ENCODE measurements at regions of chr16 and their contacts with region 1.

Region 1: DNA sequence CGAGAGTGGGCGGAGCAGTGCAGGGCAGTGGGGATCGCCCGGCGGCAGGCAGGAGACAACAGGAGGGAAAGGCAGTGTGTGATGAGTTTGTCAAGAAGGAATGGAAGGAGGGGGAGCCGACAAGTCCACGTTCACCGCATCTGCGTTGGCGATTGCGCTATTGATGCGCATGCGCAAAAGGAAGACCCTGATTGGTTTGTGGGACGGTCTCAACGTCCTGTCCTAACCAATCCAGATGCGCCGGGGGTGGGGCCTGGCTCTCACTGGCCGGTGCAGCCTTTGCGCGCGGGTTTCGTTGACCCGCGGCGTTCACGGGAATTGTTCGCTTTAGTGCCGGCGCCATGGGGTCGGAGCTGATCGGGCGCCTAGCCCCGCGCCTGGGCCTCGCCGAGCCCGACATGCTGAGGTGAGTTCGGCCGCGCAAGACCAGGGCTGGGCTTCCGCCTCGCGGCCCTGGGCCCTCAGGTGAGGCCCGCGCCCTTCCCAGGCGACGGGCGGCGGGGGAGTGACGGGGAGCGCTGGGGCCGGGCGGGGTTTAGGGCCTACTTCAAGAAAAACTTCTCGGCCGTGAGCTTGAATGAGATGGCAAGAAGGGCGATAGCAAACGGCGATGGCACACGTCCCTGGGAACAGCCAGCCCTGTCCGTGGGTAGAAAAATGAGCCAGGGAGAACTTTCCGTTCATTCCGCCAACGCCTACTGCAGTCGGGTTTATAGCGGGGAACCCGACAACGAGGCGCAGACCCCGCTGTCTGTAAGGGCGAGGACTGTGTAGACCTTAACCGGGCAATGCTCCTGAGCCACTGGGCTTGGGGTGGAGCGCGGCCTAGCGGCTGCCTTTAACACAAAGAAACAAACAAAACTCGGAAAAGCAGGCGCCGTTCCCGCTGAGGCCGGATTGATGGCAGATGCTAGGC is at the start of gene ORC6:
- DNase-seq: peak; percentile 98
- H3K4me3 ChIP-seq: peak within 1 kb of the TSS; percentile 71 to 74
- H3K27ac ChIP-seq: peak within 1 kb of the TSS; percentile 92 to 95
- H3K4me1 ChIP-seq: peaks cover 4% of the 10 kb centered on the region
- H3K27me3 ChIP-seq: no peaks in the 10 kb centered on the region
- CTCF ChIP-seq: peak in 1 of 4 experiments; percentile 31
- POLR2A ChIP-seq: no peak
- total RNA-seq, gene ORC6: 1.4 to 16.8 TPM

Region 2: GRCh38 chr16:46466226-46466625 is 223.4 kb before region 1 on chr16:
- intact Hi-C with region 1: no loop called
- DNase-seq: no peak
- H3K4me3 ChIP-seq: no peak overlapping the region
- H3K27ac ChIP-seq: no peak overlapping the region
- H3K4me1 ChIP-seq: no peaks in the 10 kb centered on the region
- H3K27me3 ChIP-seq: no peaks in the 10 kb centered on the region
- CTCF ChIP-seq: no peak
- POLR2A ChIP-seq: no peak

Region 3: DNA sequence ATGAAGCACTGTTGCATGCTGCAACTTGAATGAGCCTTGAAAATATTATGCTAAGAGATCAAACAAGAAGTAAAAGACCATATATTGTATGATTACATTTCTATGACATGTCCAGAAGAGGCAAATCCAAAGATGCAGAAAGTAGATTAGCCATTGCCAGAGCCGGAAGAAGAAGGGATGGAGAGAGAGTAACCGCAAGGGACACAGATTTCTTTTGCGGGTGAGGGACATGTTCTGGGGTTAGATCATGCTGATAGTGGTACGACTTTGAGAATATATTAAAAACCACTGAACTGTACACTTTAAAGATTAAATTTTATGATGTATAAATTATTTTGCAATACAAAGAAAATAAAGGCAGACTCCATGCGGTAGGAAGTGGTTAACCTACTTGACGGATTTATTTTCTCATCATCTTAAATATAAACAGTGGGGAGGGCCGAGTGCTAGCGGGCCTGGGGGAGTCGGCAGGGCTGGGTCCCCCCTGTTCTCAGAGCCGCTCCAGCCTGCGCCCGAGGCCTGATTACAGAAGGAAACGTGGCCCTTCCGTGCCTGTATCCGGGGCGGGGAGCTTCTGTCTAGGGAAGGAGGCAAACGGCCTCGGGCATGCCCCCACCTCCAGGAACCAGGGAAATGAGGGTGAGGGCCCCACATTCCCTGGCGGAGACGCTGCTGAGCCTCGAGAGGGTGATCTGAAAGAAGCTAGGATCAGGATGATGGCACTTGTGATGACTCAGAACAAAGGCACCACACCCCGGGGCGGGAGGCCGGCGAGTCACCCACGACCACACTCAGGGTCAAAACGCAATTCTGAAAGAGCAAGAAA is 116.4 kb before region 1 on chr16:
- intact Hi-C with region 1: no loop called
- DNase-seq: no peak
- H3K4me3 ChIP-seq: no peak overlapping the region
- H3K27ac ChIP-seq: no peak overlapping the region
- H3K4me1 ChIP-seq: no peaks in the 10 kb centered on the region
- H3K27me3 ChIP-seq: no peaks in the 10 kb centered on the region
- CTCF ChIP-seq: no peak
- POLR2A ChIP-seq: no peak

Region 4: DNA sequence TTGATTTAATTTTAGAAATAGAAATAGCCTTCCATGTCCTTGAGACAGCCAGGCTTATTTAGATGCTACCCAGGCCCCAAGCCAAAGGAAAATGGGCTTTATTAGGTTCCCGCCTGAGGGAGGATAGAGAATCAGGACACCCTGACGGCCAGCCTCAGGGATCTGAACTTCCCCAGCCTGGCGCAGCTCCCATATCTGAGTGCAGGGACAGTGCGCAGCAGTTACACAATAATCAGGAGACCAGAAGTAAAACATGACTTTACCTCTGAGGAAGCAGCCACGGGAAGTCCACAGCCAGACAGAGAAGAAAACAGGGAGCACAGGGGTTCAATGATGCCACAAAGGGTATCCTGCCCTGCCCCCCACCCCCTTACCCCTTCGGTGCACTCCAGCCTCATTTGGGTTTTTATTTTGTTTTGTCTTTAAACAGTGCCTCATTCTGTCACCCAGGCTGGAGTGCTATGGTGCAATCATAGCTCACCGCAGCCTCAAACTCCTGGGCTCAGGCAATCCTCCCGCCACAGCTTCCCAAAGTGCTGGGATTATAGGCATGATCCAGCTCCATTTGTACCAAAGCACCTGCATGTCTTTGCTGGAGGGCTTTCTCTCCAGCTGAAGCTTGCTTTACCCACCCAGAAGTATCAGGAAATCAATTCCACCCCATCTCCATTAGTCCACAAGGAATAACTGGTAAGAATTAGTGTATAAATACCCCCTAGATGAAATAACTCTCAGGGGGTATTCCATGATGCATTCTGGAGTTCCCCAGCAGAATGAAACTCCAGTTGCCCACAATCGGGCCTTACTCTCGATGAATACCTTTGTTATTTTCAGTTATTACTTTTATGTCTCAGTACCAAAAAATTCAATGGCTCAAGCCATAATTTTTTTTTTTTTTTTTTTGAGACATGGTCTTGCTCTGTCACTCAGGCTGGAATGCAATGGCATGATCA is 21.8 kb after region 1 on chr16:
- intact Hi-C with region 1: no loop called
- DNase-seq: no peak
- H3K4me3 ChIP-seq: no peak overlapping the region
- H3K27ac ChIP-seq: no peak overlapping the region
- H3K4me1 ChIP-seq: no peaks in the 10 kb centered on the region
- H3K27me3 ChIP-seq: no peaks in the 10 kb centered on the region
- CTCF ChIP-seq: no peak
- POLR2A ChIP-seq: no peak

Region 5: GRCh38 chr16:46801428-46802049 is 111.9 kb after region 1 on chr16:
- intact Hi-C with region 1: loop called (anchors 10 kb)
- DNase-seq: no peak
- H3K4me3 ChIP-seq: no peak overlapping the region
- H3K27ac ChIP-seq: no peak overlapping the region
- H3K4me1 ChIP-seq: no peaks in the 10 kb centered on the region
- H3K27me3 ChIP-seq: no peaks in the 10 kb centered on the region
- CTCF ChIP-seq: peak in 3 of 4 experiments; percentile 24 to 36 (median 28)
- POLR2A ChIP-seq: no peak

Region 6: GRCh38 chr16:46830902-46831647 is 141.5 kb after region 1 on chr16 and contains the start of gene C16orf87:
- intact Hi-C with region 1: loop called (anchors 2 kb)
- DNase-seq: peak; percentile 88
- H3K4me3 ChIP-seq: peak within 1 kb of the TSS; percentile 94 to 98
- H3K27ac ChIP-seq: peak within 1 kb of the TSS; percentile 86 to 87
- H3K4me1 ChIP-seq: peaks cover 8% of the 10 kb centered on the region
- H3K27me3 ChIP-seq: no peaks in the 10 kb centered on the region
- CTCF ChIP-seq: peak in 2 of 4 experiments; percentile 10
- POLR2A ChIP-seq: peak; percentile 50
- total RNA-seq, gene C16orf87: 8.1 to 24.4 TPM

Measured in prostate gland (tissue), 2 donors.